ENCODE measurements at regions of chr1 and their contacts with region 1.

Region 1: DNA sequence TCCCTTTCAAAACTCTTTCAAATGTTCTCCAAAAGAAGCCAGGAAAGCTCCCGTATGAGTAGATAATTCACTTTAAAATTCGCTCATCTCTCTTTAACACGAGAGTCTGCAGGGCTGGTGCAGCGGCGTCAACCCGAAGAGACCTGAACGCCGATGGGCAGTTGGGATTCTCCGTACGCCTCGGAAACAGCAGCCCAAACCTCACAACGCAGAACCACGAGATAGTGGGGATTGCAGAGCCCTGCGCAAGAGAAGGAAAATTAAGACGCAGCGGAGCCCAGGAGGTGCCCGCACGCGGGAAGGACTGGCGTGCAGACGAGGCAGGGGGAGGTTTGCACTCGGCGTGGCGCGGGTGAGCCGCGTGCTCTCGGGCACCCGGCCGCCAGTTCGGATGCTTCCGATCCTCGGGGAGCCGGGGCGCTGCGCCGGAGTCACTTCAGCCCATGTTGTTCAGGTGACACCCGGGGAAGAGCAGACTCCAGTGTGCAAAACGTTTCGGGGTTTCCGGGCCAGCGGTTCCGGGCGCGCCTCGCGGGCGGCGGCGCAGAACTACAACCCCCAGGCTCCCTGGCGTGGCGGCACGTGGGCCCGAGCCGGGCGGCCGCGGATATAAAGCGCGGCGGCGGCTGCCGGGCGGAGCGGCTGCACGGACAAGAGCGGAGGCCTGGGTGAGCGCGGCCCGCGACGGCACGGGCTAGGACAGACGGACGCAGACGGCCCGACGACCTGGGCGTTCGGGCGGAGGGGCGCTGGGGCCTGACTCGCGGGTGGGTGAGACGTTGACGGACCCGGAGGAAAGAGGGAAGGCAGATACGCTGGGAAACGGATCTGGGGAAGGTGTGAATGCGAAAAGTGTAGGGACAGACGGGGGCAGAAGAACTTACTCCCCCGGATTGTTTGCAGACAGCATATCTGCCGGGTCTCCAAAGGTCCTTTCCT is at the start of gene NPL:
- H3K4me3 ChIP-seq: peak within 1 kb of the TSS; percentile 41
- H3K27ac ChIP-seq: peak within 1 kb of the TSS; percentile 47; the same call in 1 of the 2 replicates
- H3K4me1 ChIP-seq: 0 out of 2 replicates have a peak, but pooled peaks cover 2% of the 10 kb centered on the region
- CTCF ChIP-seq: peak; percentile 46; the same call in 1 of the 2 replicates

Region 2: DNA sequence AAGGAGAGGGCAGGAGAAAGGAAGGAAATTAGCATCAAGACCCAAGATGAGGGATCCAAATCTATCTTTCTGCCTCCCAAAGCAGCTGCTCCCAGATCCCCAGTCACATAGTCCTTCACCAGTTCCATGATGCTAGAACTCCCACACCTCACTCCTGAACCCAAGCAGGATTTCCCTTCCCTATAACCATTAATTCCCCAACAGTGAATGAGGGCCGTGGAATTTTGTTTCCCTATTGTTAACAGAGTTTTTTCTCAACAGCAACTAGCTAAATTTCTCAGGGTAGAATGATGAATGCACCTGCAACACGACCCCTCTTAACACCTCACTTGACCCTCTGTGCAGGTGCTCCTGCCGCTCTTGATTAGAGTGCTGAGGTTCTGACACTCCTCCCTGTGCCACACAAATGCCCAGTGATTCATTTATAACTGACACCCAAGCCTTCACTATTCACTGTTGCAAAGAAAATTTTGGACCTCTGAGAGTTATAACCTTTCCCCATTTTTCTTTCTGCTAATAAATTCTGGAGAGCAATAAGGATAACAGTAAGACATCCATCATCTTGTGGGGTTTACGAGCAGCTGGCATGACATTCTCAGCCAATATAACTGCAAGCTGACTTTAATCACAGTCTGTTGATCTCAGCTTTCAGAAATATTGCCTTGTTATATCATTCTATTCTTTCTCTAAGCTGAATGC is 25.2 kb before region 1 on chr1:
- CTCF ChIA-PET with region 1: interaction called, 10 read pairs
- POLR2A ChIA-PET with region 1: no interaction called
- H3K4me3 ChIP-seq: no peak overlapping the region
- H3K27ac ChIP-seq: no peak overlapping the region
- H3K4me1 ChIP-seq: no peaks in the 10 kb centered on the region
- CTCF ChIP-seq: no peak

Region 3: DNA sequence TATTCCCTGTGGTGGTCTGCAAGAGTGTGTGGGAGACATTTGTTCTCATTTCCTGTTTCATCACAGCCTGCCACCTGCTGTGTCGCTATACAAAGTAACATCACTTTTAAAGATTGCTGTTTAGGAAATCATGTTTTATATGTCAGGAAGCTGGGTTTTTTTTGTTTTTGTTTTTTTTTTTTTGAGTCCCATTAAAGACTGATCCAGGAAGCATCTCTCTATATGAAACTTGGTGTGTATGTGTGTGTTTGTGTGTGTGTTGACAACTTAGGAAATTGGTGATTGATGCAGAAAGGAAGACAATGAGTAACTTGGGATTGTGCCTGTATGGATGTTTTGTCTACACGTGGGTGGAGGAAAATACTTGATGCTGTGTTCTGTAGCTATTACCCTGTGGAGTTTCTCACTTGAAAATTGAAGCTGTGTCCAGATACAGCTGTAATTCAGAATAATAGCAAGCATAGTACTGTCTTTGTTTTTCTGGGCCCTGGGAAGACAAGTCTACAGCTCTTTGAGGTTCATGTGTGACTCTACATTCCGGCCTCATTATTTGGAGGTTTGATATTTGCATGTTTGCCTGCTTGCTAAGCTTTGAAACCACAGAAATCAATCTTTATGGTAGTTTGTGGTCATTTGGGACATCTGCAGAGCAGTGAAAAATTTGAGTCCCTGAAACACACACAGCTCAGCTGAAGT is 281.7 kb after region 1 on chr1:
- CTCF ChIA-PET with region 1: no interaction called
- POLR2A ChIA-PET with region 1: no interaction called
- H3K4me3 ChIP-seq: no peak overlapping the region
- H3K27ac ChIP-seq: no peak overlapping the region
- H3K4me1 ChIP-seq: peaks cover 23% of the 10 kb centered on the region
- CTCF ChIP-seq: no peak

Region 4: DNA sequence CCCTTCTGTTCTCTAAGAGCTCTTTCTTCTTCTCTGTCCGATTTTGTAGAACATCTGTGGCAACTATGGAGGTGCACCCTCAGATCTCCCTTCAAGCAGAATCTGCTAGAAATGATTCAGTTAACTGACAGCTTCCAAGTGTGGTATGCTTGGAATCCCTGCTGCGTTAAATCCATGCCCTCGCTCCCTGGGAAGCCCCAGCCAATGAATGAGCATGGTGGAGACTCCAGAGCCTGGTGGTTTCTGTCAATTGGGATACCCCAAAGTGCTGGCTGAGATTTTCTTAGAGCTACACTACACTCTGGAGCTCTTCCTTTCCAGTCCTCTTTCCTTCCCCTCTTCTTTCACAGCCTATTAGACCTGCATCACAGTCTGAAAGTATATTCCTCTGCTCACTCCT is 1481.1 kb after region 1 on chr1:
- CTCF ChIA-PET with region 1: no interaction called
- POLR2A ChIA-PET with region 1: no interaction called
- H3K4me3 ChIP-seq: no peak overlapping the region
- H3K27ac ChIP-seq: no peak overlapping the region
- H3K4me1 ChIP-seq: no peaks in the 10 kb centered on the region
- CTCF ChIP-seq: no peak

Measured in HEK293 (cell line).